ENCODE measurements at regions of chr4 and their contacts with region 1.

Region 1: DNA sequence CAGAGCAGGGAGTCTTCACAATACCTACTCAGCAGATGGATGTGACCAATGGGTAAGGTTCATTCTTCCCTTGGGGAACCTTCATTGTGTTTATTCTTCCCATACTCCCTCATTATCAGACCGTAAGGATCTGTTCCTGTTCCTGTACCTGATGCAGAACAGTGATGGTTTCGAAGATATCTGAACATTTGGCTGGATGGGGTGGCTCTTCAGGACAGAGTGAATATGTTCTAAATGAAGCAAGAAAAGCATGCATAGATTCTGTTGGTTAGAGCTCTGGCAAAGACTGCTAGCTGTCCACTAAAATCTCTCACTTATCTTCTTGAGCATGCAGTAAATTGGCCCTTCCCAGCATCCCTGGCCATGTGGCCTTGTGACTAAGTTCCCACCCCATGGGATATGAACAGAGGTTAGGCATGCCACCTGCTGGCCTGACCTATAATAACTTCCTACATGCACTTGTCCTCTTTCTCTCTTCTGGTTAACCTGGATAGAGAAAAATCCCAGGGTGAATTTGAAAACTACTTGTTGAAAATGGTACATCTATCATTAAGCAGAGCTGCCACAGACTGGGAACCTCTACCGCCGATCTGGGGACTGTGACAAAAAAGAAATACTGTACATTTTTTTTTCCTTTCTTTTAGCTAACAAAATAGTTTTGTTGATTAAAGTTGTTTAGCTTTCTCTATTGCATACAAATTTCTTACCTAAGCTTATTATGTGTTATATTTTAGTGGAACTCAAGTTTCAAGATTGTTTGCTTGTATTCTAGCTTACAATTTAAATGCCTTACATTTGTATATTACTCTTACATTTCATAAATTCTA is 60.0 kb upstream of the BANK1 start:
- DNase-seq: peak; percentile 73
- ATAC-seq: peak; percentile 90
- H3K4me3 ChIP-seq: no peak overlapping the region
- H3K4me3 Mint-ChIP-seq: no peak overlapping the region
- H3K27ac ChIP-seq: no peak overlapping the region
- H3K27ac Mint-ChIP-seq: peak overlapping the region; percentile 13
- H3K4me1 ChIP-seq: peaks cover 6 to 9% of the 10 kb centered on the region in 2 donors
- H3K4me1 Mint-ChIP-seq: peaks cover 14% of the 10 kb centered on the region
- H3K27me3 ChIP-seq: no peaks in the 10 kb centered on the region
- H3K27me3 Mint-ChIP-seq: no peaks in the 10 kb centered on the region
- CTCF ChIP-seq: peak; percentile 80

Region 2: DNA sequence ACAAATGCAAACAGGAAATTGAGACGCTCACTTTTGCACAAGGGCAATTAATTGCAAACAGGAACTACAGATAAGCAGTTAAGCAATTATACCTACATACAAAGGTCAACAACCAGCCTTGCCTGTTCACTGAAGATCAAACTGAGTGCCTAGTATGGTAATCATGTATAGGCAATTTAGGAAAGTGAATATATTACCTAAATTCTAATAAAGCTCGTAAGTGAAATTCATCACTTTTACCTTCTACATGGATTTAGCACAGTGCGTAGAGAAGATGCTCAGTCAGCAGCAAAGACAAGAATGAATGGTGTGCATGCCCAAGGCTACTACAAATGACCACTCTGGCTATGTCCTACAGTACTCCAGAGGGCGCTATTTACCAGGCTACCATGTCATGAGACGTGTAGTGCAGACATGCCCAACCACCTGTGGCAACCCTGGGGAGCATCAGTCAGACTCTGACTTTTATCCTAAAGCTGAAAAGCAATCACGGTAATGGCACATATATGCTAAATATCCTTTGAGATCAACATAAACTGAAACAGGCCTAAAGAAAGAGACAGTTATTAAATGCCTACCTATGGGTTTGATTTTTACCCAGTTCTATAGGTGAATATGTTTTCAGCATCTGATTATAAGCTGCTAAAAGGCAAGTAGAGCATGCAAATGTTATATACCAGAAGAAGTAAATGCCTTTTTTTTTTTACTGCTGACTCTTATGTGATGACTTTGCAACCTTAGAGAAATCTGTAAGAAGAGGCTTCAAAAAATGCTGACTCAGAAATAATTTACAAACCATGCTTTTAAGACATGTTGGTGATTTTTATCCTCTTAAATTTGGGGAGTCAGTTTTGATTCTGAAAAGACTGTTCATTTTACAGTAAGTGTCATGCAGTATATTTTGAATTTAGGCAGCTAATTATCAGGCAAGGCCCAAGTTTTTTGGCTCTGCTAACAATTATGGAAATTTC is 561.2 kb before region 1 on chr4:
- CTCF ChIA-PET with region 1: interaction called, 82 read pairs
- POLR2A ChIA-PET with region 1: interaction called, 3 read pairs
- intact Hi-C with region 1: loop called (anchors 1 kb)
- DNase-seq: peak; percentile 76
- ATAC-seq: peak; percentile 96
- H3K4me3 ChIP-seq: no peak overlapping the region
- H3K4me3 Mint-ChIP-seq: no peak overlapping the region
- H3K27ac ChIP-seq: no peak overlapping the region
- H3K27ac Mint-ChIP-seq: no peak overlapping the region
- H3K4me1 ChIP-seq: peaks cover 7 to 18% of the 10 kb centered on the region in 2 donors
- H3K4me1 Mint-ChIP-seq: peaks cover 27% of the 10 kb centered on the region
- H3K27me3 ChIP-seq: no peaks in the 10 kb centered on the region
- H3K27me3 Mint-ChIP-seq: no peaks in the 10 kb centered on the region
- CTCF ChIP-seq: peak; percentile 77

Region 3: GRCh38 chr4:101187841-101188240 is 542.7 kb before region 1 on chr4:
- CTCF ChIA-PET with region 1: interaction called, 12 read pairs
- POLR2A ChIA-PET with region 1: no interaction called
- intact Hi-C with region 1: no loop called
- DNase-seq: peak; percentile 23
- ATAC-seq: no peak
- H3K4me3 ChIP-seq: no peak overlapping the region
- H3K4me3 Mint-ChIP-seq: no peak overlapping the region
- H3K27ac ChIP-seq: no peak overlapping the region
- H3K27ac Mint-ChIP-seq: no peak overlapping the region
- H3K4me1 ChIP-seq: peaks cover 20 to 33% of the 10 kb centered on the region in 2 donors
- H3K4me1 Mint-ChIP-seq: peaks cover 56% of the 10 kb centered on the region
- H3K27me3 ChIP-seq: no peaks in the 10 kb centered on the region
- H3K27me3 Mint-ChIP-seq: no peaks in the 10 kb centered on the region
- CTCF ChIP-seq: peak; percentile 43

Region 4: GRCh38 chr4:101596781-101597552 is 133.5 kb before region 1 on chr4:
- CTCF ChIA-PET with region 1: interaction called, 3 read pairs
- POLR2A ChIA-PET with region 1: no interaction called
- intact Hi-C with region 1: loop called (anchors 10 kb)
- DNase-seq: peak; percentile 57
- ATAC-seq: peak; percentile 64
- H3K4me3 ChIP-seq: no peak overlapping the region
- H3K4me3 Mint-ChIP-seq: peak overlapping the region; percentile 8
- H3K27ac ChIP-seq: no peak overlapping the region
- H3K27ac Mint-ChIP-seq: no peak overlapping the region
- H3K4me1 ChIP-seq: peaks cover 10 to 14% of the 10 kb centered on the region in 2 donors
- H3K4me1 Mint-ChIP-seq: peaks cover 15% of the 10 kb centered on the region
- H3K27me3 ChIP-seq: no peaks in the 10 kb centered on the region
- H3K27me3 Mint-ChIP-seq: no peaks in the 10 kb centered on the region
- CTCF ChIP-seq: peak; percentile 51

Region 5: GRCh38 chr4:101806914-101807313 is 76.4 kb after region 1 on chr4:
- CTCF ChIA-PET with region 1: interaction called, 12 read pairs
- POLR2A ChIA-PET with region 1: no interaction called
- intact Hi-C with region 1: no loop called
- DNase-seq: peak; percentile 95
- ATAC-seq: peak; percentile 91
- H3K4me3 ChIP-seq: peak overlapping the region; percentile 13 to 42 (median 38)
- H3K4me3 Mint-ChIP-seq: peak overlapping the region; percentile 81
- H3K27ac ChIP-seq: peak overlapping the region; percentile 94 to 99
- H3K27ac Mint-ChIP-seq: peak overlapping the region; percentile 97
- H3K4me1 ChIP-seq: peaks cover 73 to 87% of the 10 kb centered on the region in 2 donors
- H3K4me1 Mint-ChIP-seq: peaks cover 77% of the 10 kb centered on the region
- H3K27me3 ChIP-seq: no peaks in the 10 kb centered on the region
- H3K27me3 Mint-ChIP-seq: no peaks in the 10 kb centered on the region
- CTCF ChIP-seq: peak; percentile 34

Measured in B cell (primary cell).